Vagina (tissue), 2 donors: ENCODE measurements at regions of chr17 and their contacts with region 1.

Region 1: DNA sequence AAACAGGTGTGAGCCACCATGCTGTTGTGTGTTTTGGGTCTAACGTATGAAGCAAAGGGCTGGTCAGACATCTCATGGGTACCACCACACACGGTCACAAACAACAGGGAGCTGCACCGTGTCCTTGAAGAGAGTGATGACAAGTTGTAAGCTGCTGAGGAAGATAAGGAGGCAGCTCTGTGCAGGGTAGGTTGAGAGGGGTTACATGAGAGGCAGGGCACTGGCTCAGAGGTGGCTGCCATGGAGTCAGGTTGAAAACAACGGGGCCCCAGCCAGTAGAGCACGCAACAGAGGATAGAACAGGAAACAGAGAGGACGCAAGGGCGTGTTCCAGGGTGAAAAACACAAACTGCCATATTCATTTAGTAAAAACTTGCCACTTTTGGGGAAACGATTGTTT is 52.2 kb downstream of the TRARG1 start:
- DNase-seq: no peak
- H3K4me3 ChIP-seq: no peak overlapping the region
- H3K27ac ChIP-seq: no peak overlapping the region
- H3K4me1 ChIP-seq: peaks cover 10% of the 10 kb centered on the region
- H3K27me3 ChIP-seq: no peaks in the 10 kb centered on the region
- CTCF ChIP-seq: no peak
- POLR2A ChIP-seq: no peak

Region 2: GRCh38 chr17:1256699-1257098 is 75.0 kb before region 1 on chr17:
- intact Hi-C with region 1: loop called (anchors 5 kb)
- DNase-seq: no peak
- H3K4me3 ChIP-seq: no peak overlapping the region
- H3K27ac ChIP-seq: no peak overlapping the region
- H3K4me1 ChIP-seq: peaks cover 25% of the 10 kb centered on the region
- H3K27me3 ChIP-seq: no peaks in the 10 kb centered on the region
- CTCF ChIP-seq: no peak
- POLR2A ChIP-seq: no peak

Region 3: DNA sequence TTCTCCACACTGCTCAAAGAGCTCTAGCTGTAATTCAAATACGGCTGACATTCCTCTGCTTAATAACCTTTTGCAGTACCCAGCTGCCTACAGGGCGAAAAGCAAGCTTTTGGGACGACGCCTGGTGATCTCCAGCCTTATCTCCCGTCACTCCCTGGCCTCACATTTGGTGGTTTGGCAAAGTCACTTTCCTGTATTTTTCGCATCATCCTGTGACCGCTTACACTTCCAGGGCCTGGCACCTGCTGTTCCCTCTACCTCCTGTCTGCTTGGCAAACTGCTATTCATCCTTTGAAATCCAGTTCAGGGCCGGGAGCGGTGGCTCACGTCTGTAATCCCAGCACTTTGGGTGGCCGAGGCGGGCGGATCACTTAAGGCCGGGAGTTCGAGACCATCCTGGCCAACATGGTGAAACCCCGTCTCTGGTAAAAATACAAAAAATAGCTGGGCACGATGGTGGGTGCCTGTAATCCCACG is 64.2 kb before region 1 on chr17:
- intact Hi-C with region 1: loop called (anchors 5 kb)
- DNase-seq: no peak
- H3K4me3 ChIP-seq: peak overlapping the region; percentile 55 to 94
- H3K27ac ChIP-seq: peak overlapping the region; percentile 79
- H3K4me1 ChIP-seq: peaks cover 21% of the 10 kb centered on the region
- H3K27me3 ChIP-seq: no peaks in the 10 kb centered on the region
- CTCF ChIP-seq: no peak
- POLR2A ChIP-seq: no peak